ENCODE measurements at regions of chr5 and their contacts with region 1.

Region 1: GRCh38 chr5:157328277-157328912 is 62.5 kb downstream of the CYFIP2 start:
- DNase-seq: peak; percentile 69
- H3K4me3 Mint-ChIP-seq: peak overlapping the region; percentile 31
- H3K27ac Mint-ChIP-seq: peak overlapping the region; percentile 78
- H3K4me1 Mint-ChIP-seq: peaks cover 51% of the 10 kb centered on the region
- H3K27me3 Mint-ChIP-seq: no peaks in the 10 kb centered on the region

Region 2: DNA sequence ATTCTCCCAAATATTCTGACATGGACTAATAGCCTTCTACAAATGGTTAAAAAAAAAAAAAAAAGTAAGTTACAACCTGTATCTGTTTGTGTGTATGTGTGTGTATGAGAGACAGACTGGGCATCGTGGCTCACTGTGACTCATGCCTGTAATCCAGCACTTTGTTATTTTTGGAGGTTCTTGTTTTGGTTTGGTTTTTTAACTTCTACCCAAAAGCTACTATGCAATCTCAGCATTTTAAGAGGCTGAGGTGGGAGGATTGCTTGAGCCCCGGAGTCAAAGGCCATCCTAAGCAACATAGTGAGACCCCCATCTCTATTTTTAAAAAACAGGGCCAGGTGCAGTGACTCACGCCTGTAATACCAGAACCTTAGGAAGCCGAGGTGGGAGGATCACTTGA is 251.8 kb before region 1 on chr5:
- CTCF ChIA-PET with region 1: no interaction called
- intact Hi-C with region 1: no loop called
- DNase-seq: no peak
- H3K4me3 Mint-ChIP-seq: no peak overlapping the region
- H3K27ac Mint-ChIP-seq: no peak overlapping the region
- H3K4me1 Mint-ChIP-seq: peaks cover 12% of the 10 kb centered on the region
- H3K27me3 Mint-ChIP-seq: no peaks in the 10 kb centered on the region

Region 3: GRCh38 chr5:157312492-157312891 is 15.9 kb before region 1 on chr5:
- CTCF ChIA-PET with region 1: interaction called, 12 read pairs
- intact Hi-C with region 1: no loop called
- DNase-seq: peak; percentile 82
- H3K4me3 Mint-ChIP-seq: no peak overlapping the region
- H3K27ac Mint-ChIP-seq: peak overlapping the region; percentile 90
- H3K4me1 Mint-ChIP-seq: peaks cover 41% of the 10 kb centered on the region
- H3K27me3 Mint-ChIP-seq: no peaks in the 10 kb centered on the region

Region 4: GRCh38 chr5:157354800-157355199 is 26.4 kb after region 1 on chr5:
- CTCF ChIA-PET with region 1: interaction called, 81 read pairs
- intact Hi-C with region 1: loop called (anchors 2 kb)
- DNase-seq: no peak
- H3K4me3 Mint-ChIP-seq: no peak overlapping the region
- H3K27ac Mint-ChIP-seq: no peak overlapping the region
- H3K4me1 Mint-ChIP-seq: peaks cover 36% of the 10 kb centered on the region
- H3K27me3 Mint-ChIP-seq: no peaks in the 10 kb centered on the region

Region 5: DNA sequence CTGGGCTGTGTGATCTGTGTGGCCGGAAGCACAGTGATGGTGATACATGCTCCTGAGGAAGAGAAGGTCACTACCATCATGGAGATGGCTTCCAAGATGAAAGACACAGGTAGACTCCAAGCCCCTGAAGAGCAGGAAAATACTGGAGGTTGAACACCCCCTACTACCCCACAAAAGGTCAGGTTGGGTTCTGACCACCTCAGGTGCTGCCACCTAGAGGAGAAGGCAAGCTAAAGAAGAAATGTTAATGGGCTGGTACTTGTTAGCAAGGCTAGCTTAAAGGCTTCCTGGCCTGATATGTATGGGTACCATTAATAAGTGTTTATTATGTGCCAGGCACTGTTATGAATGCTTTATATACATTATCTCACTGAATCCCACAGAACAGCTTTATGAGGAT is 143.3 kb after region 1 on chr5:
- CTCF ChIA-PET with region 1: interaction called, 21 read pairs
- intact Hi-C with region 1: loop called (anchors 1 kb)
- DNase-seq: peak; percentile 49
- H3K4me3 Mint-ChIP-seq: no peak overlapping the region
- H3K27ac Mint-ChIP-seq: no peak overlapping the region
- H3K4me1 Mint-ChIP-seq: no peaks in the 10 kb centered on the region
- H3K27me3 Mint-ChIP-seq: no peaks in the 10 kb centered on the region

Region 6: GRCh38 chr5:157665467-157666100 is 337.2 kb after region 1 on chr5:
- CTCF ChIA-PET with region 1: no interaction called
- intact Hi-C with region 1: loop called (anchors 5 kb)
- DNase-seq: no peak
- H3K4me3 Mint-ChIP-seq: no peak overlapping the region
- H3K27ac Mint-ChIP-seq: no peak overlapping the region
- H3K4me1 Mint-ChIP-seq: peaks cover 8% of the 10 kb centered on the region
- H3K27me3 Mint-ChIP-seq: peaks cover 17% of the 10 kb centered on the region

Region 7: DNA sequence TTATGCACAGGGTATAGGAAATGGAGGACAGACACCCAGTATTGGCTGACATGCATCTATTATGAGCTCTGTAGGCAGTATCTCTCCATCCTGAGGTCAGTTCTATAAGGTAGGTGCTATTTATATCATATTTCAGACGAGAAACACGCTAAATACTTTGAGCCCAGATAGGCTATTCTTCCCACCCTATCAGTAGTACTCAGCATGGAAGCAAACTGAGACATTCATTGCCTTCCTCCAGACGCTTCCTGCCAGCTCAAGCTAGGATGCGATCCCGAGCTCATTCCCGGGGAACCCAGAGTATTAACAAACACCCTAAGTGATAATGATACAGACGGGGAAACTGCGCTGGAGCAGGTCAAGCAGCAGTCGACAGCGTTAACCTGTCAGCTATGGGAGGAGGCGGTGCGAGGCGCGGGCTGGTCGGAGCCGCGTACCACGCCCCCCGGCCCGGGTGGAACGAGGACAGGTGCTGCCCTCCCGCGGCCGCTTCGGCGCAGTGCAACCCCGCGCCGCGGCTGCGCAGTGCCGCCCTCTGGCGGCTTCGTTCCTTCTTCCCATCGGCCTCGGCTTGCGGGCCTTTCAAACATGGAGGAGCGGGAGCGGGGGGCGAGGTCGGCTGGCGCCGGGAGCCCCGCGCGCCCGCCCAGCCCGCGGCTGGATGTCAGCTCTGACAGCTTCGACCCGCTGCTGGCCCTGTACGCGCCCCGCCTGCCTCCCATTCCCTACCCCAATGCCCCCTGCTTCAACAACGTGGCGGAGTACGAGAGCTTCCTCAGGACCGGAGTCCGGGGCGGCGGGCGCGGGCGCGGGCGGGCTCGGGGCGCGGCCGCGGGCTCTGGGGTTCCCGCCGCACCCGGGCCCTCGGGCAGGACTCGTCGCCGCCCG is 415.0 kb after region 1 on chr5 and contains the start of gene LSM11:
- CTCF ChIA-PET with region 1: interaction called, 7 read pairs
- intact Hi-C with region 1: loop called (anchors 1 kb)
- DNase-seq: peak; percentile 89
- H3K4me3 Mint-ChIP-seq: peak within 1 kb of the TSS; percentile 92
- H3K27ac Mint-ChIP-seq: peak within 1 kb of the TSS; percentile 71
- H3K4me1 Mint-ChIP-seq: peaks cover 32% of the 10 kb centered on the region
- H3K27me3 Mint-ChIP-seq: no peaks in the 10 kb centered on the region
- total RNA-seq, gene LSM11: 8.2 to 8.8 TPM